ENCODE measurements at regions of chr6 and their contacts with region 1.

Region 1: GRCh38 chr6:17584241-17584803 is 15.8 kb upstream of the FAM8A1 start:
- DNase-seq: peak in 1 of 2 donors; percentile 70
- ATAC-seq: peak; percentile 53 to 64 (median 58)
- H3K4me3 ChIP-seq: no peak overlapping the region
- H3K4me3 Mint-ChIP-seq: no peak overlapping the region
- H3K27ac ChIP-seq: no peak overlapping the region
- H3K27ac Mint-ChIP-seq: peak overlapping the region in 1 of 2 donors; percentile 14
- H3K4me1 ChIP-seq: peaks cover 15% of the 10 kb centered on the region
- H3K4me1 Mint-ChIP-seq: peaks cover 18 to 30% of the 10 kb centered on the region in 2 donors
- H3K27me3 ChIP-seq: peaks cover 2% of the 10 kb centered on the region
- H3K27me3 Mint-ChIP-seq: peaks cover 3 to 6% of the 10 kb centered on the region in 2 donors
- CTCF ChIP-seq: peak; percentile 80

Region 2: GRCh38 chr6:17688481-17688880 is 104.2 kb after region 1 on chr6:
- intact Hi-C with region 1: no loop called
- DNase-seq: no peak
- ATAC-seq: no peak
- H3K4me3 ChIP-seq: no peak overlapping the region
- H3K4me3 Mint-ChIP-seq: no peak overlapping the region
- H3K27ac ChIP-seq: no peak overlapping the region
- H3K27ac Mint-ChIP-seq: peak overlapping the region; percentile 47 to 61
- H3K4me1 ChIP-seq: peaks cover 3% of the 10 kb centered on the region
- H3K4me1 Mint-ChIP-seq: peaks cover 62 to 69% of the 10 kb centered on the region in 2 donors
- H3K27me3 ChIP-seq: no peaks in the 10 kb centered on the region
- H3K27me3 Mint-ChIP-seq: no peaks in the 10 kb centered on the region
- CTCF ChIP-seq: no peak

Region 3: DNA sequence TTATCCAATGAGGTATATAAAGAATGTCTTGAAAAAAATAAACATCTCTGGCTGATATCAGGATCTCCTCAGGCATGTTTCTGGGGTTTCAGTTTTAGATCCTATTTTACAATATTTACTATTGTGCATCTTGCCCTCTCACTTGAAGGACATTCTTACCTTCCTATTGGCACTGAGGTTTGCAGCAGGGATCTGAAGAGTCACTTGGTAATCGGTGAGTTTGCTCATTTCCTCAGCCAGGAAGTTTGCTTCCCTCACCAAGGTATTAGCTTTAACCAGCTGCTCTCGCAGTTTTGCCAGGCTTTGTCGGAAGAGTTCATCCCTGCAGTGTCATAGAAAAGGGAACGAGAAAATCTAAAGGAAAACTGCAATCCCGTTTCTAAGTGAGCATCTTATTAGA is 224.3 kb after region 1 on chr6:
- intact Hi-C with region 1: loop called (anchors 1 kb)
- DNase-seq: no peak
- ATAC-seq: no peak
- H3K4me3 ChIP-seq: no peak overlapping the region
- H3K4me3 Mint-ChIP-seq: no peak overlapping the region
- H3K27ac ChIP-seq: no peak overlapping the region
- H3K27ac Mint-ChIP-seq: no peak overlapping the region
- H3K4me1 ChIP-seq: no peaks in the 10 kb centered on the region
- H3K4me1 Mint-ChIP-seq: peaks cover 4 to 6% of the 10 kb centered on the region in 2 donors
- H3K27me3 ChIP-seq: no peaks in the 10 kb centered on the region
- H3K27me3 Mint-ChIP-seq: no peaks in the 10 kb centered on the region
- CTCF ChIP-seq: no peak

Region 4: DNA sequence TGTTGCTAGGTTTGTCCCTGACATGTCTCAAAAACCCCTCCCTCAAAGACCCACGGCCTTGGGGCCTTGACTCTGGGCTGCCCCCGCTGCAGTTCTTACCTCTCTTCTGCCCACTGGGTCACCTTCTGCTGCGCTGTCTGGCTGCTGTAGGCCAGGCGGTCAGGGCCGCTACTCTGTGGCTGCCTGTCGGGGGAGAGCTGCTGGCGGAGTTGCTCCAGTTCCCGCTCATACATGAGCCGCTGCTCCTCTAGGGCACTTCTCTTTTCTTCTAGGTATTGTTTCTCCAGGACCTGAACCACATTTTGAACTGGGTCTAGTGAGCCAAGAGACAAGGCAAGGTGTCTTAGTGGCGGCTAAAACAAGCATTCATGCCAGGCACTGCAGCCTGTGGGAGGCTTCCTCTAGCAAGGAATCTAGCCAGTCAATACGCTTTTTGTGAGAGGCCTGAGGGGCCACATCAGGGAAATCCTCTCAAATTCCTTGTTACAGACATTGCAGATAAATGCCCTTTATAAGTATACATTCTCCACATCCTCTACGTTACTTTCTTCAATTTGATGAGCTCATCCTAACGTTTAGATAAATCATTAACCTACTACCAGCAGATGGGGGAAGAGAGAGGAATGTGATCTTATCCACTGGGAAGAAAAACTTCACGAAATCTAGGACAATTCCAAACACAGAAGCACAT is 232.7 kb after region 1 on chr6:
- intact Hi-C with region 1: loop called (anchors 5 kb)
- DNase-seq: no peak
- ATAC-seq: no peak
- H3K4me3 ChIP-seq: no peak overlapping the region
- H3K4me3 Mint-ChIP-seq: no peak overlapping the region
- H3K27ac ChIP-seq: no peak overlapping the region
- H3K27ac Mint-ChIP-seq: no peak overlapping the region
- H3K4me1 ChIP-seq: no peaks in the 10 kb centered on the region
- H3K4me1 Mint-ChIP-seq: no peaks in the 10 kb centered on the region
- H3K27me3 ChIP-seq: no peaks in the 10 kb centered on the region
- H3K27me3 Mint-ChIP-seq: no peaks in the 10 kb centered on the region
- CTCF ChIP-seq: no peak